MCF 10A (cell line): ENCODE measurements at regions of chr16 and their contacts with region 1.

Region 1: DNA sequence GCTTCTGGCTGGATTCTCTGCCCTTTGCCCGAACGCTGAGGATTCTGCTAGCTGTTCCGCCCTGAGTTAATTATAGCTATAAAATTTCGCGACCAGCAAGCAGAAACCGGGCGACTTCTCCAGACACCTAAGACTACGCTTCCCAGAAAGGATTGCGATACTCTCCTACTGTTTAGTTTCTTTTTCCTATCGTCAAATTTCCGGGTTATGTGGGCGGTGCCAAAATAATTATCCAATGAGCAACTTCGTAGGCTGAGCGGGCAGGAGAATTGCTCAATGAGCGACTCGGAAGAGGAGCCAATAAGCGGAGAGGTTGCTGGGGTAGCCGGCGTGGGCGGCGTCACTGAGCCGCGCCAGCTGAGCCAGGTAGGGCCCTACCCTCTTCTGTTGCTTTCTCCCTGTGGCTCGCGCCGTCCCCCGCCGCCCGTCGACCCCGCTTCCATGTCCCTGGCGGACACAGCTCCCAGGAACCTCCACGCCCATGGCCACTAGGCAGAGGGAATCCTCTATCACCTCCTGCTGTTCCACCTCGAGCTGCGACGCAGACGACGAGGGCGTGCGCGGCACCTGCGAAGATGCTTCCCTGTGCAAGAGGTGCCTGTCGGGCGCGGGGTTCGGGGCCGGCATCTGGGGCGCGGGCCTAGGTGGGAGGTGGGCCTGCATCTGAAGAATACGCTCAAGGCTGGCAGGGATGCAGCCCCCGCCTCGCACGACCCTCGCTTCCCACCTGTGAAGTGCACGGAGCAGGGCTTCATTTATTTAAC is at the start of gene LCMT1:
- DNase-seq: peak; percentile 98
- H3K4me3 Mint-ChIP-seq: peak within 1 kb of the TSS; percentile 93
- H3K27ac Mint-ChIP-seq: peak within 1 kb of the TSS; percentile 92
- H3K4me1 Mint-ChIP-seq: peaks cover 41% of the 10 kb centered on the region
- H3K27me3 Mint-ChIP-seq: no peaks in the 10 kb centered on the region
- CTCF ChIP-seq: no peak
- total RNA-seq, gene LCMT1: 28.1 and 36.3 TPM in 2 replicates

Region 2: DNA sequence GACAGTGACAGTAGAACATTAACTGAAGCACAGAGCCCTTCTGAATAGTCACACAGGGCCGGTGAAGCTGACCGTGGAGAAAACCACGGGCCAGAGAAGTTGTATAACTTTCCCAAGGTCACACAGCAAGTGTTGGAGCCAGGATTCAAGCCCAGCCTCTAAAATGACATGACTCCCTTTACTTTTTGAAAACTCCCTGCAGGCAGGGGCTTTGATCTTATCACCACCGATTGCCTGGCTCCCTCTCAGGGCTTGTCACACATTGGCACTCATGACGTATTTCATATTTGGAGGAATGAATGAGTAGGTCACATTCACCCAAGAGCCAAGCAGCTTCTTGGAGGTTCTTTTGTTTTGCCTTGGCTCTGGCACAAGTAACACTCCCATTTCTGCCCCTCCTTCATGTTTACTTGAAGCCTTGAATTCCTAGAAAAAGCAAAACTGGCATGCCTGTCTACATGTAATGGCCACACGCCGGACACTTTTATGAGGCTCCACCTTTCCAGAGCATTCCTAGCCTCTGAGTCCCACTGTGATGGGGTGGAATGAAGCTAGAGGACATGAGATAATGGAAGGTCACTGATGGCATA is 585.5 kb before region 1 on chr16:
- CTCF ChIA-PET with region 1: no interaction called
- POLR2A ChIA-PET with region 1: interaction called, 8 read pairs
- intact Hi-C with region 1: loop called (anchors 10 kb)
- DNase-seq: peak; percentile 72
- H3K4me3 Mint-ChIP-seq: no peak overlapping the region
- H3K27ac Mint-ChIP-seq: peak overlapping the region; percentile 65
- H3K4me1 Mint-ChIP-seq: peaks cover 16% of the 10 kb centered on the region
- H3K27me3 Mint-ChIP-seq: no peaks in the 10 kb centered on the region
- CTCF ChIP-seq: no peak